ENCODE measurements at regions of chr14 and their contacts with region 1.

Region 1: GRCh38 chr14:100692859-100693558 is 33.7 kb upstream of the DLK1 start:
- DNase-seq: peak; percentile 98
- ATAC-seq: peak; percentile 89
- H3K4me3 ChIP-seq: peak overlapping the region; percentile 58
- H3K27ac ChIP-seq: peak overlapping the region; percentile 76
- H3K4me1 ChIP-seq: peaks cover 37% of the 10 kb centered on the region
- H3K27me3 ChIP-seq: no peaks in the 10 kb centered on the region
- CTCF ChIP-seq: no peak

Region 2: DNA sequence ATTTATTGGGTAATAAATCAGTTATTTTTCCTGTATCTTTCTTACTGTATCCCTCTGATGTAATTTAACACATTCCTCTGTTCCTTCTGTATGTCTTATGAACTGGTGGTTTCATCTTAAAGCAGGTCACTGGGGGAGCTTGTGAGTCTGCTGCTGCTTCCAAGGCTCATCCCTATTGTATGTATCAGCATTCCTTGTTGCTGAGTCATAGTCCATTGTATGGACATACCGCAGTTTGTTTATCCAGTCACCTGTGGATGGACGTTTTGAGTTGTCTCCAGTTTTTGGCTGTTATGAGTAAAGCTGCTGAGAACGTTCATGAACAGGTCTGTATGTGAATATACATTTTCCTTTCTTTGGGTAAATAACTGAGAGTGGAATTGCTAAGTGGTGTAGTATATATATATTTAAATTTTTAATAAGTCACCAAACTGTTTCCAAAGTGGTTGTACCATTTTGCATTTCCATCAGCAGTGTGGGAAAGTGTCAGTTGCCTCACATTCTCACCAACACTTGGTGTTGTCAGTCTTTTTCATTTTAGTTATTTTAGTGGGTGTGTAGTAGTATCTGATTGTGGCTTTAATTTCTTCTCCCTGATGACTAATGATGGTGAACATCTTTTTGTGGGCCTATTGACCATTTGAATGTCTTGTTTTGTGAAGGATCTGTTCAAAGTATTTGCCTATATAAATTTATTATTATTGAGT is 188.5 kb before region 1 on chr14:
- CTCF ChIA-PET with region 1: no interaction called
- POLR2A ChIA-PET with region 1: no interaction called
- intact Hi-C with region 1: no loop called
- DNase-seq: peak; percentile 85
- ATAC-seq: peak; percentile 68
- H3K4me3 ChIP-seq: no peak overlapping the region
- H3K27ac ChIP-seq: no peak overlapping the region
- H3K4me1 ChIP-seq: no peaks in the 10 kb centered on the region
- H3K27me3 ChIP-seq: no peaks in the 10 kb centered on the region
- CTCF ChIP-seq: 0 out of 2 replicates have a peak, but pooled peaks have one; percentile 14

Region 3: GRCh38 chr14:100747021-100747586 is 54.1 kb after region 1 on chr14:
- CTCF ChIA-PET with region 1: no interaction called
- POLR2A ChIA-PET with region 1: no interaction called
- intact Hi-C with region 1: loop called (anchors 1 kb)
- DNase-seq: peak; percentile 95
- ATAC-seq: peak; percentile 99
- H3K4me3 ChIP-seq: no peak overlapping the region
- H3K27ac ChIP-seq: peak overlapping the region; percentile 63
- H3K4me1 ChIP-seq: peaks cover 12% of the 10 kb centered on the region
- H3K27me3 ChIP-seq: no peaks in the 10 kb centered on the region
- CTCF ChIP-seq: peak; percentile 38; the same call in 1 of the 2 replicates

Region 4: GRCh38 chr14:100755649-100756048 is 62.6 kb after region 1 on chr14:
- CTCF ChIA-PET with region 1: no interaction called
- POLR2A ChIA-PET with region 1: interaction called, 3 read pairs
- intact Hi-C with region 1: loop called (anchors 2 kb)
- DNase-seq: peak; percentile 77
- ATAC-seq: peak; percentile 98
- H3K4me3 ChIP-seq: no peak overlapping the region
- H3K27ac ChIP-seq: peak overlapping the region; percentile 75
- H3K4me1 ChIP-seq: peaks cover 5% of the 10 kb centered on the region
- H3K27me3 ChIP-seq: no peaks in the 10 kb centered on the region
- CTCF ChIP-seq: no peak